Right ventricle myocardium superior (tissue), 1 donor: ENCODE measurements at regions of chr11 and their contacts with region 1.

Region 1: GRCh38 chr11:91041626-91042025 is 818.8 kb upstream of the CHORDC1 start:
- DNase-seq: no peak
- ATAC-seq: no peak

Region 2: DNA sequence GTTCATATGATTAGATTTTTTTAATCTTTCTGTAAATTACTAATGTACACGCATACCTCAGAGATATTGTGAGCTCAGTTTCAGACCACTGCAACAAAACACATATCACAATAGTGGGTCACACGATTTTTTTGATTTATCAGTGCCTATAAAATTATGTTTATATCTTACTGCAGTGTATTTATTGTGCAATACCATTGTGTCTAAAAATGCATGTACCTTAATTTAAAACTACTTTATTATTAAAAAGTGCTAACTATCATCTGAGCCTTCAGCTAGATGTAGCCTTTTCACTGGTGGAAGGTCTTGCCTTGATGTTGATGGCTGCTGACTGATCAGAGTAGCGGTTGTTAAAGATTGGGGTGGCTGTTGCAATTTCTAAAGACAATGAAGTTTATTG is 100.0 kb after region 1 on chr11:
- intact Hi-C with region 1: no loop called
- DNase-seq: no peak
- ATAC-seq: no peak

Region 3: GRCh38 chr11:91248199-91248807 is 206.7 kb after region 1 on chr11:
- intact Hi-C with region 1: loop called (anchors 5 kb)
- DNase-seq: no peak
- ATAC-seq: peak; percentile 15